ENCODE measurements at regions of chr3 and their contacts with region 1.

Region 1: GRCh38 chr3:33401781-33402180 is 38.4 kb downstream of the UBP1 start:
- H3K4me3 Mint-ChIP-seq: no peak overlapping the region
- H3K27ac Mint-ChIP-seq: no peak overlapping the region
- H3K4me1 Mint-ChIP-seq: peaks cover 6% of the 10 kb centered on the region
- H3K27me3 Mint-ChIP-seq: no peaks in the 10 kb centered on the region

Region 2: GRCh38 chr3:33513262-33513863 is 111.6 kb after region 1 on chr3:
- intact Hi-C with region 1: no loop called
- H3K4me3 Mint-ChIP-seq: no peak overlapping the region
- H3K27ac Mint-ChIP-seq: no peak overlapping the region
- H3K4me1 Mint-ChIP-seq: no peaks in the 10 kb centered on the region
- H3K27me3 Mint-ChIP-seq: no peaks in the 10 kb centered on the region

Region 3: DNA sequence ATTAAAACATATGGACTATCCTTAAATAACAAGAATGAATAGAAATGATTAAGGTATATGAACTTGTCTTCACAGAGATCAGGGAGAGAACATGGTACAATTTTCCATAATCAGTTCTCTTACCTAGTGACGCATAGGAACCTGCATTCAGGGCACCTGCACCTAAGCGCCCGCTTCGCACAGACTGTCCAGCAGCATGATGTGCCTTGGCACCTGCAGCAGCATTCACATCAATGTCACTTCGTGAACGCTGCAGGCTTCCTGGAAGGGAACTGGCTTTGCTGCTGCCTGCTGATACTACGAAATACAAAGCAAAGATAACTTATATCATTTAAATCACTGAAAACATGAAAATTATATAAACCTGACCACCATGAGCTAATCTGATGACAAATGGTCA is 201.0 kb after region 1 on chr3:
- intact Hi-C with region 1: loop called (anchors 10 kb)
- H3K4me3 Mint-ChIP-seq: no peak overlapping the region
- H3K27ac Mint-ChIP-seq: no peak overlapping the region
- H3K4me1 Mint-ChIP-seq: no peaks in the 10 kb centered on the region
- H3K27me3 Mint-ChIP-seq: no peaks in the 10 kb centered on the region